Transverse colon (tissue), 4 donors: ENCODE measurements at regions of chr4 and their contacts with region 1.

Region 1: GRCh38 chr4:20565075-20565721 is 135.1 kb upstream of the PACRGL start:
- DNase-seq: no peak
- H3K4me3 ChIP-seq: no peak overlapping the region
- H3K27ac ChIP-seq: no peak overlapping the region
- H3K4me1 ChIP-seq: no peaks in the 10 kb centered on the region
- H3K27me3 ChIP-seq: no peaks in the 10 kb centered on the region
- CTCF ChIP-seq: no peak
- EP300 ChIP-seq: no peak
- POLR2A ChIP-seq: no peak

Region 2: GRCh38 chr4:20684852-20685763 is 119.9 kb after region 1 on chr4:
- in situ Hi-C with region 1: loop called in 1 of 4 experiments (anchors 25 kb)
- intact Hi-C with region 1: no loop called
- DNase-seq: no peak
- H3K4me3 ChIP-seq: no peak overlapping the region
- H3K27ac ChIP-seq: no peak overlapping the region
- H3K4me1 ChIP-seq: peaks cover 0 to 7% (median 2%) of the 10 kb centered on the region in 4 donors
- H3K27me3 ChIP-seq: no peaks in the 10 kb centered on the region
- CTCF ChIP-seq: peak; percentile 59 to 70 (median 68)
- EP300 ChIP-seq: no peak
- POLR2A ChIP-seq: no peak

Region 3: GRCh38 chr4:20735931-20736330 is 170.7 kb after region 1 on chr4:
- in situ Hi-C with region 1: no loop called
- intact Hi-C with region 1: no loop called
- DNase-seq: no peak
- H3K4me3 ChIP-seq: no peak overlapping the region
- H3K27ac ChIP-seq: no peak overlapping the region
- H3K4me1 ChIP-seq: no peaks in the 10 kb centered on the region
- H3K27me3 ChIP-seq: no peaks in the 10 kb centered on the region
- CTCF ChIP-seq: no peak
- EP300 ChIP-seq: no peak
- POLR2A ChIP-seq: no peak